ENCODE measurements at regions of chr1 and their contacts with region 1.

Region 1: DNA sequence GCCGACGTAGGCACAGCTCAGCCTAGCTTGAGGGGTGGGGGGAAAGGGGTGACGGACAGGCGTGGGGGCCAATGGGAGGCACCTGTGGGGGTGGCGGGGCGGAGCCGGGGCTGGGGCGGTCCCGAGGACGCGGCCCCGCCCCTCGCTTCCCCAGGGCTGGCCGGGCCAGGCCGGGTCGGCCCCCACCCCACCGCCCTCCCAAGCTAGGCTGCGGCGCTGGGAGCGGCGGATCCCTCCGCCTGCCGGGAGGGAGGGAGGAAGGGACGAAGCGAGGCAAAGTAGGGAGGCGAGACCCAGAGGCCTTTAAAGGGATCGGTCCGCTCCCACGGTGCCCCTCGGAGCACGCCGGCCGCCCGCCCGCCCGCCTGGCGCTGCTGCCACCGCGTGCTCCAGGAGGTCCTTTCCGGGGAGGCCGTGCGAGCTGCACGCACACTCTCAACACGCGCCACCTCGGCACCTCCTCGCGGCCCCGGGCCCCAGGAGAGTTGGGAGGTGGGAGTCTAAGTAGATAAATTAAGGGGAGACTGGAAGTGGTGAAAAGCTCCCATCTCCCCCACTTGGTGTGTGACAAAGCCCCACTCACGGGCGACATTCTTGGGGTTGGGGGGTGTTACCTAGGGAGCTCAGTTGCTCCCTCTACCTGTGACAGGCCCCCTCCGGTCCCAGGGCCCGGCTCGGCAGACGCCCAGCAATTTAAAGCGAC is 373 bp upstream of the MEF2D start:
- DNase-seq: peak; percentile 85 to 96 (median 91)
- ATAC-seq: peak; percentile 71 to 80 (median 74)
- H3K4me3 ChIP-seq: peak overlapping the region; percentile 87 to 91
- H3K4me3 Mint-ChIP-seq: peak overlapping the region; percentile 82 to 92 (median 90)
- H3K27ac ChIP-seq: peak overlapping the region; percentile 97
- H3K27ac Mint-ChIP-seq: peak overlapping the region; percentile 97 to 99
- H3K4me1 ChIP-seq: peaks cover 54 to 84% of the 10 kb centered on the region in 2 experiments
- H3K4me1 Mint-ChIP-seq: peaks cover 67 to 79% (median 76%) of the 10 kb centered on the region in 3 donors
- H3K27me3 ChIP-seq: no peaks in the 10 kb centered on the region
- H3K27me3 Mint-ChIP-seq: no peaks in the 10 kb centered on the region

Region 2: DNA sequence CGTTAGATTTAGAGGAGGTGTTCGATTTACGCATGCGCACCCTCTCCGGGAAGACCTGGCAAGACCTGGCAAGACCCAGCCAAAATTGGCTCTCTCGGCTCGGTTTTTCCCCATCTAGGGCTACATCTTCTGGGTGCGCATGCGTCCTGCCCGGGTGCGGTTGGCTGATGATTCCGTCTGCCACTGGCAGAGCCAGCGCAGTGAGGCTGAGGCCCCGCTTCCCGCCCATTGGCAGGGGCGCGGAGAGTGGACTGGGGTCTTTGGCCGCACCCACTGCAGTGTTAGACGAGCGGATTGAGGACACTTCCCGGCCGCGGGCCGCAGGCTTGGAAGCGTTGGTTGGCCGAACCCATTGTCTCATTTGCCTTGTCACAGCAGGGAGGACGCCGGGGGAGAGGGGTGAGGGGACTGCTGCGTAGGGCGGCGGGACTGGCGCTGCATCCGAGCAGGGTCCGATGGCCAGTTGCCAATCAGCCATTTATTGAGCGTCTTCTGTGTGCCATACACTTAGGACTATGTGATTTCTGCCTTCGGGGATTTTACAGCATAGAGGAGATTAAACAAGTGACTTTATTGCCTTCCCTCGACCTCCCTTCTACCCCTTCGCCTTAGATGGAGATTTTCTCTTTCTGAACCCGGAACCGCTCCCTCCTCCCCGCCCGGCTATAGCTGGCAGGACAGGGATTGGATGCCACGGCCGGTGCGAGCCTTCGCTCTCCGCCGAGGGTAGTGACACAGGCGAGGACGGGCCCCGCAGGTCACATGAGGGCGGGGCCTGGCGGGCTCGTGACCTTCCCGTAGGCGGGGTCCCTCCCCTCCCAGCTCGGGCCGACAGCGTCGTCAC is 44.1 kb before region 1 on chr1:
- CTCF ChIA-PET with region 1: interaction called, 4 to 23 read pairs
- POLR2A ChIA-PET with region 1: interaction called, 4 to 14 read pairs
- DNase-seq: peak; percentile 85 to 99 (median 96)
- ATAC-seq: peak; percentile 83 to 88 (median 85)
- H3K4me3 ChIP-seq: peak overlapping the region; percentile 74 to 77
- H3K4me3 Mint-ChIP-seq: peak overlapping the region; percentile 87 to 89 (median 88)
- H3K27ac ChIP-seq: peak overlapping the region; percentile 97
- H3K27ac Mint-ChIP-seq: peak overlapping the region; percentile 94 to 98
- H3K4me1 ChIP-seq: peaks cover 4 to 19% of the 10 kb centered on the region in 2 experiments
- H3K4me1 Mint-ChIP-seq: peaks cover 14 to 22% (median 19%) of the 10 kb centered on the region in 3 donors
- H3K27me3 ChIP-seq: no peaks in the 10 kb centered on the region
- H3K27me3 Mint-ChIP-seq: no peaks in the 10 kb centered on the region

Region 3: DNA sequence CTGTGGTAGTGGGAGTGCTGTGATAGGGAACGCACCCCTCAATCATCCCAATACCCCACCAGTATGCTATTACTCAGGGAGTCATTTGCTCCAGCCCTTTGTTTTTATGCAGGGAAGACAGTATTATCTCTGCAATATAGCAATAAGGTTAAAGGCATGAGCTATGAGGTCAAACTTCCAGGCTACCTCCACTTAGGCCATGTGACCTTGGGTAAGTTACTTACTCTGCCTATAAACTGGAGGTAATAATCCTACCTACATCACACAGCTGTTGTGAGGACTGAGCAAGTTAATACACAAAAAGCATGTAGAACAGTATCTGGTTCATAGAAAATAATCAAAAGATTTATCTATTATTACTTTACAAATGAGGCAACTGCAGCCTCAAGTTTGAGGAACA is 30.5 kb before region 1 on chr1:
- CTCF ChIA-PET with region 1: no interaction called
- POLR2A ChIA-PET with region 1: interaction called, 6 to 15 read pairs
- DNase-seq: no peak
- ATAC-seq: no peak
- H3K4me3 ChIP-seq: no peak overlapping the region
- H3K4me3 Mint-ChIP-seq: no peak overlapping the region
- H3K27ac ChIP-seq: no peak overlapping the region
- H3K27ac Mint-ChIP-seq: no peak overlapping the region
- H3K4me1 ChIP-seq: peaks cover 0 to 5% of the 10 kb centered on the region in 2 experiments
- H3K4me1 Mint-ChIP-seq: peaks cover 4 to 8% (median 4%) of the 10 kb centered on the region in 3 donors
- H3K27me3 ChIP-seq: no peaks in the 10 kb centered on the region
- H3K27me3 Mint-ChIP-seq: no peaks in the 10 kb centered on the region

Region 4: DNA sequence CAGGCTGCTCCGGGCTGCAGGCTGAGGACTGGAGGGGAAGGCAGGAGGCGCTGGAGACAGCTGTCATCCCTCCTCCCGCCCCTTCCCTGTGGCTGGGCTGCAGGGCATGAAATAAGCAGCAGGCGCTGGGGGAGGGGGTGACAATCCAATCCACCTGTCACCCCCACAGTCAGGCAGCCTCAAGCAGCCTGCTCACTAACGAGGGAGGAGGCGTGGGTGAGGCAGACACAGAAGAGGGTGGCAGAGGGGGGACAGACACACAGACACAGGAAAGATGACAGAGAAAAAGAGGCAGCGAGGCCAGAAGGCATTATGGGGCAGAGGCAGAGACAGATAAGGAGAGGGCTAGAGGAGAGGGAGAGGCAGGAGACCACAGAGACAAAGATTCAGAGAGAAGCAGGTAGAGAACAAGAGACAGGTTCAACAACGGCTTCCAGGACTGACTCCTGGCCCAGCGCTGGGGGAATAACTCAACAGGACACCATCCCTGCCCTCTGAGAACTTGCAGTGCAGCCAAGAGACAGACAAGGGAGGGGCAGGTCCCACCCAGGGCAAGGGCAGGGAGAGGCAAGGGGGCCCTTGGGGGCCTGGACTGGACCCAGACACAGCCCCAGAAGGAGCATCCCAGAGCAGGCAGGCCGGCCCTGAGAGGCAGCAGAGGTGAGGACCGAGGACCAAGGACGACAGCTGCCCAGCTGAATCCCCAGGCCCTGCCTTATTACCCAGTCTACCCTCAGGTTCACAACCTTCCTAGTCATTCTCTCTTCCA is 11.6 kb before region 1 on chr1:
- CTCF ChIA-PET with region 1: interaction called, 8 to 31 read pairs
- POLR2A ChIA-PET with region 1: interaction called, 3 to 14 read pairs
- DNase-seq: peak in 25 of 35 experiments; percentile 16 to 61 (median 33)
- ATAC-seq: peak; percentile 59 to 64 (median 61)
- H3K4me3 ChIP-seq: peak overlapping the region; percentile 13 to 48
- H3K4me3 Mint-ChIP-seq: peak overlapping the region; percentile 48 to 82 (median 56)
- H3K27ac ChIP-seq: peak overlapping the region; percentile 75
- H3K27ac Mint-ChIP-seq: peak overlapping the region; percentile 92
- H3K4me1 ChIP-seq: peaks cover 51 to 93% of the 10 kb centered on the region in 2 experiments
- H3K4me1 Mint-ChIP-seq: peaks cover 94 to 96% (median 95%) of the 10 kb centered on the region in 3 donors
- H3K27me3 ChIP-seq: no peaks in the 10 kb centered on the region
- H3K27me3 Mint-ChIP-seq: no peaks in the 10 kb centered on the region

Region 5: DNA sequence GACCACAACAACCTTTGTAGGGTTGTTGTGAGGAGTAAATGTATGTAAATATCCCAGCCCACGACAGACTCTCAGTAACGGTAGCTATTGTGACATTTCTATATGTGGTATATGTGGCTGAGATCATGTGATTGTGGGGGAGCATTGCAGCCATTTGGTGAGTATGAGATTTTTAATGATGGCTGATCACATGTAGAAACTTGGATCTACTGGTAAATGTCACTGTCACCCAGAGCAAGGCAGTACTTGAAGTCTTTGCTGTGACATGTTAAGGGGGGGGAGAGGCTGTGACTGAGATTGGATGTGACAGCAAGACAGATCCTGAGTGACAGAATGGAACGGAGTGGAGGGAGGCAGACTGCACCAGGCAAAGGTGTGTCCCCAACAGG is 23.5 kb after region 1 on chr1:
- CTCF ChIA-PET with region 1: interaction called in 1 of 2 experiments, 25 read pairs
- POLR2A ChIA-PET with region 1: interaction called in 1 of 2 experiments, 4 read pairs
- DNase-seq: peak in 7 of 35 experiments; percentile 9 to 57 (median 14)
- ATAC-seq: peak; percentile 32 to 70 (median 50)
- H3K4me3 ChIP-seq: no peak overlapping the region
- H3K4me3 Mint-ChIP-seq: peak overlapping the region; percentile 35 to 63 (median 41)
- H3K27ac ChIP-seq: peak overlapping the region; percentile 7
- H3K27ac Mint-ChIP-seq: peak overlapping the region; percentile 29 to 64
- H3K4me1 ChIP-seq: peaks cover 14 to 33% of the 10 kb centered on the region in 2 experiments
- H3K4me1 Mint-ChIP-seq: peaks cover 35 to 42% (median 35%) of the 10 kb centered on the region in 3 donors
- H3K27me3 ChIP-seq: peaks cover 0 to 2% of the 10 kb centered on the region in 2 experiments
- H3K27me3 Mint-ChIP-seq: no peaks in the 10 kb centered on the region

Measured in T-cell (primary cell).